ENCODE measurements at regions of chr3 and their contacts with region 1.

Region 1: DNA sequence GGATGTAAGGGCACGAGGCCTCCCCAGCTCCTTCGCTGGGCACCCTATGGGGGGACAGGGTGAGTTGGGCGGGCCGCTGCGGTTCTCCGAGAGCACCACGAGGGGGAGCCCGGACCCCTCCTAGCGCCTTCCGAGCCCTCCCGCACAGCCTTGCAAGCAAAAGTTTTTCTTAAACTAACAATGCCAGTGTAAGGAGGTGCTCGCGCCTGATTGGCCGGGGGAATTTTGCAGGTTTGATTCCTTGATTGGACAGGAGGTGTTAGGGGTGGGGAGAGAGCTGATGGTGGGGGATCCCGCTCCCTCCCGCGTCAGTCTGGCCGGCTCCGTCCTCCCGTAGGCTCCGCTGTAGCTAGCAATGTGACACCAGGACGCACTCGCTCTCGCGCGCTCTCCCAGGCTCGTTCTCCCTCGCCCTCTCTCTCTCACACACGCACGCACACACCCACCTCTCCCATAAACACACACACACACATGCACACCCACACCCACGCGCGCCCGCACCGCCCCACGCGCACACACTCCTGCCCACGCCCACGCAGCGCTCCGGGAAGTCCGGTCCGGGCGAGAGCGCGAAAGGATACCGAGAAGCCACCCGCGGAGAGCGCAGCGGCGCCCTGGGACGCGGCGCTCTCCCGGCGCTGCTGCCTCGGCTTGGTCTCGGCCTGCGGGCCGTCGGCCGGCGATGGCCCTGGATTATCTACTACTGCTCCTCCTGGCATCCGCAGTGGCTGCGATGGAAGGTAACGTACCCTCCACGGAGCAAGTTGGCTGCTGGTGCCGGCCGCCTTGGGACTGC is at the start of gene EPHB1:
- DNase-seq: peak; percentile 92 to 97
- H3K4me3 ChIP-seq: peak within 1 kb of the TSS; percentile 46 to 73 (median 67)
- H3K27ac ChIP-seq: no peak within 1 kb of the TSS
- H3K4me1 ChIP-seq: peaks cover 3 to 17% (median 12%) of the 10 kb centered on the region in 4 experiments; a peak in 6 of 7 replicates
- H3K27me3 ChIP-seq: peaks cover 14 to 42% (median 33%) of the 10 kb centered on the region in 4 experiments
- CTCF ChIP-seq: peak; percentile 82 to 89 (median 85)
- EP300 ChIP-seq: no peak
- POLR2A ChIP-seq: peak in 1 of 2 experiments; percentile 90; a peak in 2 of 3 replicates
- RAD21 ChIP-seq: peak; percentile 99
- total RNA-seq, gene EPHB1: 5.9 TPM in 2 replicates

Region 2: GRCh38 chr3:134754768-134755559 is 40.2 kb before region 1 on chr3:
- CTCF ChIA-PET with region 1: interaction called, 22 read pairs
- POLR2A ChIA-PET with region 1: no interaction called
- DNase-seq: peak; percentile 19 to 81
- H3K4me3 ChIP-seq: no peak overlapping the region
- H3K27ac ChIP-seq: no peak overlapping the region
- H3K4me1 ChIP-seq: no peaks in the 10 kb centered on the region
- H3K27me3 ChIP-seq: no peaks in the 10 kb centered on the region; a peak in 1 of 7 replicates
- CTCF ChIP-seq: peak; percentile 83 to 87 (median 85)
- EP300 ChIP-seq: no peak
- POLR2A ChIP-seq: no peak
- RAD21 ChIP-seq: peak; percentile 62 to 71

Region 3: GRCh38 chr3:134885877-134886621 is 90.9 kb after region 1 on chr3:
- CTCF ChIA-PET with region 1: interaction called, 19 read pairs
- POLR2A ChIA-PET with region 1: no interaction called
- DNase-seq: peak in 1 of 2 experiments; percentile 15
- H3K4me3 ChIP-seq: no peak overlapping the region
- H3K27ac ChIP-seq: no peak overlapping the region
- H3K4me1 ChIP-seq: peaks cover 0 to 2% (median 0%) of the 10 kb centered on the region in 4 experiments; a peak in 1 of 7 replicates
- H3K27me3 ChIP-seq: peaks cover 1 to 3% (median 2%) of the 10 kb centered on the region in 4 experiments; a peak in 6 of 7 replicates
- CTCF ChIP-seq: peak; percentile 23 to 72 (median 65); a peak in 3 of 4 replicates
- EP300 ChIP-seq: no peak
- POLR2A ChIP-seq: no peak
- RAD21 ChIP-seq: peak; percentile 33 to 52; a peak in 3 of 4 replicates

Region 4: GRCh38 chr3:134922101-134922500 is 127.0 kb after region 1 on chr3:
- CTCF ChIA-PET with region 1: no interaction called
- POLR2A ChIA-PET with region 1: no interaction called
- DNase-seq: no peak
- H3K4me3 ChIP-seq: no peak overlapping the region
- H3K27ac ChIP-seq: no peak overlapping the region
- H3K4me1 ChIP-seq: no peaks in the 10 kb centered on the region
- H3K27me3 ChIP-seq: no peaks in the 10 kb centered on the region
- CTCF ChIP-seq: no peak
- EP300 ChIP-seq: no peak
- POLR2A ChIP-seq: no peak
- RAD21 ChIP-seq: no peak

Region 5: DNA sequence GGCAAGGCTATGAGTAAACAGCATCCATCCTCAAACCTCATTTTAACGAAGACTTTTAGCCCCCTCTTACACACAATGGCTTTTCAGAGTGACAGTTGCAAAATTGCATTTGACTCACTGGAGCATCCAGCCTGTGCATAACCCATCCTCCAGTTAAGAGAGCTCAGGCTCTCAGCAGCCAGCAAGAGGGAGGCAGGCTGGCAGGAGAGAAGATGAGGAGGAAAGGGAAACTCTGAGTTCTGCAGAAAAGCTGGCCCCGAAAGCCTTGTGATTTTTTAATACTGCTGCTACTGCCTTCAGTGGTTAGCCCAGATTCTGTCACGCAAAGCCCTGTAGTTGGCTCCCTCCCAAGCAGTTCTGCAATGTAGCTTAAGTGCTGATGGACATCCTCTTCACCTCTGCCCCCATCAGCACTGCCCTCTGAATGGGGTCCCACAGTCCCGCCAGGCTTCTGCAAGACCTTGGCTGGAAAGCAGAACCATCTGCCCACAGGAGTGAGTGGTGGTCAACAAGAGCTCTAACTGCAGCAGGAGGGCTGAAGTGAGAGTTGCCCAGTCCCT is 371.2 kb after region 1 on chr3:
- CTCF ChIA-PET with region 1: interaction called, 12 read pairs
- POLR2A ChIA-PET with region 1: no interaction called
- DNase-seq: no peak
- H3K4me3 ChIP-seq: no peak overlapping the region
- H3K27ac ChIP-seq: no peak overlapping the region
- H3K4me1 ChIP-seq: peaks cover 0 to 8% (median 3%) of the 10 kb centered on the region in 4 experiments; a peak in 5 of 7 replicates
- H3K27me3 ChIP-seq: no peaks in the 10 kb centered on the region
- CTCF ChIP-seq: no peak
- EP300 ChIP-seq: no peak
- POLR2A ChIP-seq: no peak
- RAD21 ChIP-seq: no peak

Region 6: DNA sequence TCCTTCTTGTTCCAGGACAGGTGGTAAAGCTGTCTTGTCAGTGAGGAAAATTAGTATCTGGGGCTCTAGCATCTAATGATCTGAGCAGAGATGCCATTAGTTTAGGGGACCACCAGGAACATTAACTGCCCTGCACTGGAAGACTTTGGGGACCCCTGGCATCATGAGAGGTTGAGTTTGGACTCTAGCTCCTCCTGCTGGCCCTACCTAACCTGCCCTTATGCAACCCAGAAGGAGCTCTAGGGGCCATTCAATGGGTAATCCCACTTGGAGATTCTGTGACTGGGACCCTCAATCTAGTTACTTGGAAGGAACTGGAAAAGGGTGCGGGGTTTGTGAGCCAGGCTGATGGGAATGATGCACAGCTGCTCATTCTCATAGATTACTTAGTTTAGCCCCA is 450.9 kb after region 1 on chr3:
- CTCF ChIA-PET with region 1: interaction called, 25 read pairs
- POLR2A ChIA-PET with region 1: no interaction called
- DNase-seq: no peak
- H3K4me3 ChIP-seq: no peak overlapping the region
- H3K27ac ChIP-seq: no peak overlapping the region
- H3K4me1 ChIP-seq: no peaks in the 10 kb centered on the region; a peak in 1 of 7 replicates
- H3K27me3 ChIP-seq: no peaks in the 10 kb centered on the region
- CTCF ChIP-seq: peak; percentile 39 to 59 (median 49)
- EP300 ChIP-seq: no peak
- POLR2A ChIP-seq: no peak
- RAD21 ChIP-seq: peak; percentile 56 to 69

Region 7: GRCh38 chr3:135503760-135504686 is 708.9 kb after region 1 on chr3:
- CTCF ChIA-PET with region 1: interaction called, 26 read pairs
- POLR2A ChIA-PET with region 1: no interaction called
- DNase-seq: peak; percentile 75 to 95
- H3K4me3 ChIP-seq: peak overlapping the region; percentile 2 to 47 (median 20); a peak in 5 of 8 replicates
- H3K27ac ChIP-seq: peak overlapping the region; percentile 68; the same call in 1 of the 2 replicates
- H3K4me1 ChIP-seq: peaks cover 0 to 11% (median 3%) of the 10 kb centered on the region in 4 experiments; a peak in 5 of 7 replicates
- H3K27me3 ChIP-seq: no peaks in the 10 kb centered on the region
- CTCF ChIP-seq: peak; percentile 71 to 91 (median 79)
- EP300 ChIP-seq: no peak
- POLR2A ChIP-seq: no peak
- RAD21 ChIP-seq: peak; percentile 93 to 96

Measured in H1 (cell line).